Testis (tissue), 5 donors: ENCODE measurements at regions of chr12 and their contacts with region 1.

Region 1: DNA sequence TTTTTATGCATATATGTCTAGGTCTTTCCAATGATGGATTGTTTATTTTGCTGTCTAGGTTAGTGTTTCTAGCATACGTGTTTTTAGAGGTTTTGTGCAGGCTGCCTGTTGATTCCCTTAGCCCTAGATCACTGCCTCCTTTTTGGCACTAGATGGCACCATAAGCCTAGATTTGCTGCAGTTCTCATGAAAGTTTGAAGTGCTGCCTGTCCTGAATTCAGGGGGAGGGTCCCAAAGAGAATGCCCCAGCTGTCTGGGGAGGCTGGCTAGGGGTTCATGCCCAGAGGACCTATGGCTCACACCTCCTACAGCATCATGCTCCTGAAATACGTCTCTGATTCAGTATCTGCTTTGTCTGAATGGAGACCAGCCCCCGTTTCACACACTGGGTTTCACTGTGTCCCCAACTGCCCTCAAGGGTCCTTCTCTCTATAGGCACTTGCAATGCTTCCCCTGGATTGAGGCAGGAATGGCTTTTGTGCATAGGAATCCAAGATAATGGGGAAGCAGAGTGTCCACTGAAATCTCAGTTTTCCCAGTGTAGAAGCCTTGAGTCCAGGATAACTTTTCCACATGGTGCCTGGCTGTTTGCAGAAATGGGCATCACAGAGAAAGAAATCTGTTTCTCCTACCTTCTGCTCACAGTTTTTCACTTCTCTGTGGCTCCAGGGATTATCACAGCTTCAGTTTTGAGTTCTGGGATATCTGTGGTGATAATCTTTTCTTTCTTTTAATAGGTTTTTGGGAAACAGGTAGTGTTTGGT is 14.2 kb upstream of the TXNRD1 start:
- DNase-seq: peak; percentile 52
- H3K4me3 ChIP-seq: no peak overlapping the region
- H3K27ac ChIP-seq: no peak overlapping the region
- H3K4me1 ChIP-seq: no peaks in the 10 kb centered on the region
- H3K27me3 ChIP-seq: no peaks in the 10 kb centered on the region
- CTCF ChIP-seq: peak; percentile 33 to 55 (median 45)
- POLR2A ChIP-seq: no peak

Region 2: DNA sequence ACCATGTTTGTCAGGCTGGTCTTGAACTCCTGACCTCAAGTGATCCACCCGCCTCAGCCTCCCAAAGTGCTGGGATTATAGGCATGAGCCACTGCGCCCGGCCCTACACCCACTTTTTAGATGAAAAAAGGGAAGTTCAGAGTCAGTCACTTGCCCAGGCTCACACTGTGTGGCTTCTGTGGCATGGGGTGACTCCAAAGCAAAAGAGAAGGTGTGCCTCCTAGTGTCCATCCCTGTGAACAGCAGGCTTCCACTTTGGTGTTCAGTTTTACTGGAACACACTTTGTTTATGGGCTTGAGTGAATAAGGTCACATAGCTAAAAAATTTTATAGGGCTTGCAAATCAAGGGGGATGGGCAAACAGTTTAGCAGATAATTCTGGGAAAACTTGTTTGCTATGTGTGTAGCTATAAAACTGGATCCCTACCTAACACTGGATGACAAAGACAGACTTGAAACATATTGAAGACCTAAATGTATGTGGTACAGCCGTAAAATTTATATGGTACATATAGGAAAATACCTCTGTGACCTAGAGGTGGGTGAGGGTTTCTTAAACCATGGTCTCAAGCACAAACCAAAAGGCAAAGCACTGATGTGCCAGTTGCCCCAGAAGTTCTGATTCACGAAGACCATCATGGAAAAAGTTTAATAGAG is 157.1 kb after region 1 on chr12:
- intact Hi-C with region 1: loop called (anchors 10 kb)
- DNase-seq: peak; percentile 74
- H3K4me3 ChIP-seq: no peak overlapping the region
- H3K27ac ChIP-seq: no peak overlapping the region
- H3K4me1 ChIP-seq: no peaks in the 10 kb centered on the region
- H3K27me3 ChIP-seq: no peaks in the 10 kb centered on the region
- CTCF ChIP-seq: peak; percentile 80 to 86 (median 81)
- POLR2A ChIP-seq: no peak